ENCODE measurements at regions of chr4 and their contacts with region 1.

Region 1: GRCh38 chr4:99949034-99949998 is 759 bp downstream of the H2AZ1 start:
- DNase-seq: peak; percentile 90 to 97
- H3K4me3 ChIP-seq: peak overlapping the region; percentile 73 to 94 (median 80)
- H3K27ac ChIP-seq: peak overlapping the region; percentile 96 to 99 (median 97)
- H3K4me1 ChIP-seq: peaks cover 20 to 46% (median 44%) of the 10 kb centered on the region in 4 donors
- H3K27me3 ChIP-seq: no peaks in the 10 kb centered on the region
- CTCF ChIP-seq: peak in 5 of 7 experiments; percentile 79 to 86 (median 81)
- EP300 ChIP-seq: no peak
- POLR2A ChIP-seq: no peak

Region 2: DNA sequence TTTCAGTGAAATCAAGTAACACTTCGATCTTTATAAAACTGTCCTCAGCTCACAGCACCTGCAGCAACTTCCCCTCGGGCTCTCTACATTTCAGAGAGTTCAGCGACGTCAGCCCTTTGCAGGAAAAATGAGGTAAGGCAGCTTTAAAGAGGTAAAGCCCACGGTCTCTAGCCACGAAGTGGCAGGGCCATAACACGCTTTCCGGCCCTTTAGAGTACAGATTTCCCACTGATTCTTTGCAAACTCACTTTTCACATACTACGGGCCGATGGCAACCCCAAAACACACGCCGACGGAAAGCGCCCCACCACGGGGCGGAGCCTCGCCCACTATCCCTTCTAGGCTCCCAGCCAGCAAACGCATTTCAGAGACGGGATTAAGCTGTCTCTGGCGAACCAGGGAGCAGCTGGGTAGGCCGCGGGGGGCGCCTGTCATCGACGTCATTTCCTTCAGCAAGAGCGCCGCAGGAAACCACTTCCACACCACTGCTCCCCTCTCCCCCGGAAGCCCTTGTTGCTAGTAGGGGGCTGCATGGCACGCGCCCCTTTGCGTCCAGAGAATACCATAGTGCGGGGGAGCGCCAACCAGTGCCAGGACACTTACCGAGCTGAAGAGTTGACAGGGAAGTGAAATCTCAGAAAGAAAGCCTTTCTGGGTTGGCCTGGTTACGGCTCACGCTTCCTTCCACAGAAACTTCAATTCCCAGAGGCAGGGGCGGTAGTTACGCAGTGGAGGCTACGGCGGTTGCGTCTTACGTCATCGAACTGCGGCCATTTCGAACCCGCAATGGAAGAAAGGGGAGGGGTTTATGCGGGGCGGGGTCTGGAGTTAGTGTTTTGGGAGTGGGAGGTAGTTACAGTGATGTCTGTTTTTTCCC is 385.8 kb before region 1 on chr4 and contains the start of gene TRMT10A:
- intact Hi-C with region 1: loop called (anchors 10 kb)
- DNase-seq: peak; percentile 96 to 99
- H3K4me3 ChIP-seq: peak within 1 kb of the TSS; percentile 47 to 70 (median 56)
- H3K27ac ChIP-seq: peak within 1 kb of the TSS; percentile 94 to 98 (median 96)
- H3K4me1 ChIP-seq: peaks cover 3 to 12% (median 5%) of the 10 kb centered on the region in 4 donors
- H3K27me3 ChIP-seq: peaks cover 0 to under 1% (median 0%) of the 10 kb centered on the region in 3 donors
- CTCF ChIP-seq: peak in 1 of 7 experiments; percentile 13
- EP300 ChIP-seq: no peak
- POLR2A ChIP-seq: no peak
- total RNA-seq, gene TRMT10A: 1.3 to 60.7 (median 5.4) TPM in 4 of 5 donors, not detected in the other

Region 3: GRCh38 chr4:99894161-99894997 is 54.9 kb before region 1 on chr4 and contains the start of gene LAMTOR3:
- intact Hi-C with region 1: loop called (anchors 10 kb)
- DNase-seq: peak; percentile 91 to 97
- H3K4me3 ChIP-seq: peak within 1 kb of the TSS; percentile 85 to 95 (median 92)
- H3K27ac ChIP-seq: peak within 1 kb of the TSS; percentile 79 to 92 (median 88)
- H3K4me1 ChIP-seq: peaks cover 15 to 53% (median 42%) of the 10 kb centered on the region in 4 donors
- H3K27me3 ChIP-seq: no peaks in the 10 kb centered on the region
- CTCF ChIP-seq: no peak
- EP300 ChIP-seq: no peak
- POLR2A ChIP-seq: no peak
- total RNA-seq, gene LAMTOR3: 1.7 to 48.7 (median 10.7) TPM

Region 4: DNA sequence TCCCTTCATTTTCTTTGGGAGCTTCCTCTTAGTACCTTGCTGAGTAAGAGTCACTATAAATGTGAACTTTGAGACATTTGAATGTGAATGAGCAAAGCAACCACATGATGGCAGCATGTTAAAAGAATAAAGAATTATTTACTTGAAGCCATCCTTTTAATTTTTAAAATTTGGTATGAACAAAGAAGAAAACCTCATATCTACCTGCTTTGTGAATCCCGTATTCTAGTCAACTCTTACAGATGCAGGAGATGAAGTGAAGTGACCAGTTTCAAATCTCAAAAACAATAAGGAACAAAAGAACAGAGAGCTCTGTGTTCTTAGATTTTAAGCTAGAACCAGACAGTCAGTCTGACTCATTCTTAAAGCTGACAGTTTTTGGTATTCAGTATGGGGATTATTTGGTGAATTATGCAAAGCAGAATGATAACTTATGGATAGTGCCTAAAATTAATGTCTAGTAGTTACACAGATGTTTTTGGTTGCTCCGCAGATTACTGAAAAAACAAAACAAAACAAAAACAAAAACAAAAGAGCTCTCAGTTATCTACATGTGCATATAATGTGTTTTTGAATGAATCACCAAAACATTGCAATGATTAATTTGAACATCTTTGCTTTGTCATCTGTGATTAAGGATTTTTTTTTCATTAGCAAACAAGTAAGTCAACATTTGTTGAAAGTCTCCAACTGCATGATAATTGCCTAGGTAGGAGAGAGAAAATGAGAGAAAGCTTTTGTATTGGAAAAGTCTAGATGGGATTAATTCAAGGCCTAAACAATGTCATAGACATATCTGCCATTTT is 48.9 kb after region 1 on chr4:
- intact Hi-C with region 1: no loop called
- DNase-seq: peak in 1 of 2 donors; percentile 38
- H3K4me3 ChIP-seq: no peak overlapping the region
- H3K27ac ChIP-seq: no peak overlapping the region
- H3K4me1 ChIP-seq: no peaks in the 10 kb centered on the region
- H3K27me3 ChIP-seq: no peaks in the 10 kb centered on the region
- CTCF ChIP-seq: no peak
- EP300 ChIP-seq: no peak
- POLR2A ChIP-seq: no peak

Region 5: GRCh38 chr4:100075056-100075455 is 125.7 kb after region 1 on chr4:
- intact Hi-C with region 1: no loop called
- DNase-seq: no peak
- H3K4me3 ChIP-seq: no peak overlapping the region
- H3K27ac ChIP-seq: no peak overlapping the region
- H3K4me1 ChIP-seq: no peaks in the 10 kb centered on the region
- H3K27me3 ChIP-seq: no peaks in the 10 kb centered on the region
- CTCF ChIP-seq: no peak
- EP300 ChIP-seq: no peak
- POLR2A ChIP-seq: no peak